ENCODE measurements at regions of chr2 and their contacts with region 1.

Region 1: GRCh38 chr2:64330281-64331113 is 123.5 kb upstream of the LGALSL start:
- DNase-seq: peak; percentile 60 to 89 (median 73)
- ATAC-seq: peak; percentile 22 to 34
- H3K4me3 Mint-ChIP-seq: peak overlapping the region; percentile 31 to 88 (median 68)
- H3K27ac Mint-ChIP-seq: peak overlapping the region in 8 of 10 donors; percentile 57 to 95 (median 74)
- H3K4me1 Mint-ChIP-seq: peaks cover 15 to 42% (median 37%) of the 10 kb centered on the region in 4 donors
- H3K27me3 Mint-ChIP-seq: no peaks in the 10 kb centered on the region

Region 2: GRCh38 chr2:64052468-64053241 is 277.8 kb before region 1 on chr2:
- POLR2A ChIA-PET with region 1: interaction called, 69 read pairs
- DNase-seq: peak in 5 of 10 donors; percentile 19 to 50 (median 24)
- ATAC-seq: peak; percentile 57 to 68
- H3K4me3 Mint-ChIP-seq: peak overlapping the region in 6 of 10 donors; percentile 5 to 61 (median 32)
- H3K27ac Mint-ChIP-seq: peak overlapping the region in 7 of 10 donors; percentile 6 to 83 (median 66)
- H3K4me1 Mint-ChIP-seq: peaks cover 20 to 53% (median 38%) of the 10 kb centered on the region in 4 donors
- H3K27me3 Mint-ChIP-seq: no peaks in the 10 kb centered on the region

Region 3: DNA sequence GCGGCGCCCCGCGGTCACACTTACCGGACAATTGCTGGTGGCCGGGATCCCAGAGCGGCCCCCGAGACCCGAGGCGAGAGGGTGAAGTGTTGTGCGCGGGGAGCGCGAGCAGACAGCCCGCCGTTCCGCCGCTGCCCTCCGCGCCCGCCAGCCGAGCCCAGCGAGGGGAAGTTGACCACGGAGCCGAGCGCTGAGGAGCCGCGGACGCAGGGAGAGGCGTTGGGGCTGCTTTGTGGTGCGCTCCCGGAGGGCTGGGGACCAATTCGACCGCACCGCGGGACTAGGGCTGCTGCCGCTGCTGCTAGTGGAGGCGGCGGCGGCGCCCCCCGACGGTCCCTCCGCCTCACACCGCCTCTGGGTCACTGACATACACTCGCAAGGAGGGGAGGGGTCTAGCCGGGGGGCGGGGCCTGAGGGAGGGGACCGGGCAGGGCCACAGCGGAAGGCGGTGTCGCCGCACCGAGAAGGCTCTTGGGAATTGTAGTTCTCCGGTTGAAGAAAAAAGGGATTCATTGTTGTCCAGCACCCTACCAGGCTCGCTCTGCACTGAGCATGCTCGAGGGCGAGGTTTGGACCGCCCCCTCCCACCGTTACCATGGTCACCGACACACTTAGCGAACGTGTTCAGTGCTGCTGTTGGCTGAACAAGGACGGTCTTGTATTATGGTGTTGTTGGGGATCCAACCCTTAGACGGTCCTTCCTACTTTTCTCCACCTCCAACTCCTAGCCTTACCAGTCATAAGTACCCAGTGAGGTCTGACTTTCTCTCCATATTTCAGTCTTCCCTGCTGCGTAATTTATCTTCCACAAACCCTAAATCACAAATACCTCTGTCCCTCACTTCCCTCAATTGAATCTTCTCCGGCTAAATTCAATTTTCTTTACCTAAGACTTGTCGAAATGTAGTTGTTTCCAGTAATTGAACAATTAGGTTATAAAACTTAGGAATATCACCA is 186.2 kb before region 1 on chr2 and contains the start of gene PELI1:
- POLR2A ChIA-PET with region 1: interaction called, 22 read pairs
- DNase-seq: peak; percentile 82 to 97 (median 90)
- ATAC-seq: peak; percentile 88 to 89
- H3K4me3 Mint-ChIP-seq: peak within 1 kb of the TSS; percentile 89 to 99 (median 96)
- H3K27ac Mint-ChIP-seq: peak within 1 kb of the TSS; percentile 93 to 98 (median 97)
- H3K4me1 Mint-ChIP-seq: peaks cover 12 to 31% (median 31%) of the 10 kb centered on the region in 4 donors
- H3K27me3 Mint-ChIP-seq: no peaks in the 10 kb centered on the region
- polyA plus RNA-seq, gene PELI1: 4.7 to 5.8 (median 5.3) TPM

Region 4: GRCh38 chr2:64288321-64289193 is 41.9 kb before region 1 on chr2:
- POLR2A ChIA-PET with region 1: no interaction called
- DNase-seq: no peak
- ATAC-seq: no peak
- H3K4me3 Mint-ChIP-seq: no peak overlapping the region
- H3K27ac Mint-ChIP-seq: no peak overlapping the region
- H3K4me1 Mint-ChIP-seq: peaks cover 0 to 2% (median 0%) of the 10 kb centered on the region in 4 donors
- H3K27me3 Mint-ChIP-seq: peaks cover 0 to 1% (median 0%) of the 10 kb centered on the region in 5 donors

Measured in naive thymus-derived CD8-positive, alpha-beta T cell (primary cell).